Activated CD4-positive, alpha-beta memory T cell treated with anti-CD3 and anti-CD28 coated beads for 36 hours (primary cell): ENCODE measurements at regions of chr11 and their contacts with region 1.

Region 1: GRCh38 chr11:108222686-108223448 is at the start of gene ATM:
- DNase-seq: peak; percentile 99
- H3K4me3 Mint-ChIP-seq: no peak within 1 kb of the TSS
- H3K27ac Mint-ChIP-seq: no peak within 1 kb of the TSS
- H3K4me1 Mint-ChIP-seq: peaks cover 49% of the 10 kb centered on the region
- H3K27me3 Mint-ChIP-seq: no peaks in the 10 kb centered on the region
- total RNA-seq, gene ATM: 31.3 to 31.6 TPM

Region 2: DNA sequence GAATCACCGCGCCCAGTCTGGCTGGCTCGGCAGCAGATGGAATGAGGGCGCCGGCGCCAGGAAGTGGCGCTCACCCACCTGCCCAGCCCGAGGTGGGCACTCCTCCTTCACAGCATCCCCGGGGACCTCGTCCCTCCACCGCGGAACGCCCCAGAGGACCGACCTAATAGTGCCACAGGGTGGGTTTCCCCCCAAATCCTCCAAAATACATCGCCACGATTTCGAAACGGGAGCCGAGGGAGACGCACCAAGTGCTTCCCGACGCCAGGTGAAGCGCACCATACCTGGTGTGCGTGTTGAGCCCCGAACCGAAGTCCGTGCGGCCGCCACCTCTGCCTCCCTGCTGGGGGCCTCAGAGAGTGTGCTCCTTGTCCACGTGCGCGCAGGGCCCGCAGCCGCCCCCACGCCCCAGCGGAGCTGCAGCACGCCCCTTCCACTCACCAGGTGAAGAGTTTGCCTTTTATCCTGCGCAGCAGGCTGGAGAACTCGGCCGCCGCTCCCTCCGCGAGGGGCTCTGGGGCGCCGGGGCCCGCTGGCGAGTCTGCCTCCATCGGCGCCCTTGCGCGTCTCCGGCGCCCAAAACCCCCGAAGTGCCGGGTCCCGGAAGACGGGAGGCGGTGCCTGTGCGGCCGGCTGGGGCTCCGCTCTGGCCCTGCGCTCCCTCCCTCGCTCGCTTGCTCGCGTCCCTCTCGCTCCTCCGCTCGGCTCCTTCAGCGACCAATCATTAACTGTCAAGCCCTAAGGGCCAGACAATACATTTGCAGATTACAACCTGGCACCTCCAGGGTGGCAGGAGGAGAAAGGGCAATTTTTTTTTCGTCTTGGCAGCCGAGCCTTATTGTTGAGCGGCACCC is 364.4 kb before region 1 on chr11 and contains the start of gene SLC35F2:
- CTCF ChIA-PET with region 1: no interaction called
- POLR2A ChIA-PET with region 1: no interaction called
- intact Hi-C with region 1: loop called (anchors 5 kb)
- DNase-seq: peak; percentile 83
- H3K4me3 Mint-ChIP-seq: peak within 1 kb of the TSS; percentile 95
- H3K27ac Mint-ChIP-seq: peak within 1 kb of the TSS; percentile 92
- H3K4me1 Mint-ChIP-seq: peaks cover 31% of the 10 kb centered on the region
- H3K27me3 Mint-ChIP-seq: no peaks in the 10 kb centered on the region
- total RNA-seq, gene SLC35F2: 22.8 to 24.5 TPM

Region 3: DNA sequence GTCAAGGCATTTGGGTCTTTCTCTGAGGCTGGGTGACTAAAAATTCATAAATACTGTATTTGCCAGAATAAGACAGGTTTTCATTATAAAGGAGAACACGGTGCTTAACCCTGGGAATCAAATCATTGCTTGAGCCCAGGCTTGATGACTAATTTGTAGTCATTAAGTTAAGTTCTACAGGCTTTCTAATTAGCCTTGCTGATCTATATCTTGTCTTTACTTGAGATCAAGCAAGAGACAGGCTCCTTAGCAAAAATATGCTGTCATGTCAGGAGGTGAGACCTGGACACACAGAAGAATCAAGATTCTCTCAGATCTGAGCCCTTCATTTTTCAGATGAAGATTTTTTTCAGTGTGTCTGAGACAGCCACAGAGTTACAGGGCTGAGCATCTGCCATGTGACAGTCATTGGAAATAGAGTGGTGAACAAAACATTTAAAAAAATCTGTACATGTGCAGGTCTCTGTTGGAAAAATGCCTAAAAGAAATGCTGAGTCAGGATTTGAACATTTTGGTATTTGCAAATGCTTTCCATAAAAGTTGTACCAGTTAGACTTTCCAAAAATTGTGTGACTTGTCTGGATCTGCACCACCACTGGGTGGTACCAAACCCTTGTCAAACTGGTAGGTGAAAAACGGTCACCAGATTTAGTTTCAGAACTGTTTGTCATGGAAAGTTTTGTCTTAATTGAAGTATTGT is 86.9 kb before region 1 on chr11:
- CTCF ChIA-PET with region 1: no interaction called
- POLR2A ChIA-PET with region 1: no interaction called
- intact Hi-C with region 1: loop called (anchors 1 kb)
- DNase-seq: peak; percentile 55
- H3K4me3 Mint-ChIP-seq: no peak overlapping the region
- H3K27ac Mint-ChIP-seq: peak overlapping the region; percentile 68
- H3K4me1 Mint-ChIP-seq: peaks cover 24% of the 10 kb centered on the region
- H3K27me3 Mint-ChIP-seq: no peaks in the 10 kb centered on the region

Region 4: DNA sequence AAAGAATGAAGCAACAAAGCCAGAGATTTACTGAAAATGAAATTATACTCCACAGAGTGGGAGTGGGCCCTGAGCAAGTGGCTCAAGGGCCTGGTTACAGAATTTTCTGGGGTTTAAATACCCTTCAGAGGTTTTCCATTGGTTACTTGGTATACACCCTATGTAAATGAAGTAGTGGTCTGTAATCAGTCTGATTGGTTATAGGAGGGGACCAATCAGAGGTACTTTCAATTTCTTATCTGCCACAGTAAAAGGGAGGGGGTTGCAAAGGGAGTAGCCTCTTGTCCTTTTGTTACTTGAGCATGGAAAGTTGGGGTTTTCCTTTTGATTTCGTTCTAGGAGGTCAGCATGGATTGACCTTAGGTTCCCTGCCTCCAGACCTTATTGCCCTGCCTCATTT is 63.5 kb after region 1 on chr11:
- CTCF ChIA-PET with region 1: no interaction called
- POLR2A ChIA-PET with region 1: interaction called, 3 read pairs
- intact Hi-C with region 1: loop called (anchors 2 kb)
- DNase-seq: no peak
- H3K4me3 Mint-ChIP-seq: no peak overlapping the region
- H3K27ac Mint-ChIP-seq: no peak overlapping the region
- H3K4me1 Mint-ChIP-seq: peaks cover 14% of the 10 kb centered on the region
- H3K27me3 Mint-ChIP-seq: no peaks in the 10 kb centered on the region

Region 5: DNA sequence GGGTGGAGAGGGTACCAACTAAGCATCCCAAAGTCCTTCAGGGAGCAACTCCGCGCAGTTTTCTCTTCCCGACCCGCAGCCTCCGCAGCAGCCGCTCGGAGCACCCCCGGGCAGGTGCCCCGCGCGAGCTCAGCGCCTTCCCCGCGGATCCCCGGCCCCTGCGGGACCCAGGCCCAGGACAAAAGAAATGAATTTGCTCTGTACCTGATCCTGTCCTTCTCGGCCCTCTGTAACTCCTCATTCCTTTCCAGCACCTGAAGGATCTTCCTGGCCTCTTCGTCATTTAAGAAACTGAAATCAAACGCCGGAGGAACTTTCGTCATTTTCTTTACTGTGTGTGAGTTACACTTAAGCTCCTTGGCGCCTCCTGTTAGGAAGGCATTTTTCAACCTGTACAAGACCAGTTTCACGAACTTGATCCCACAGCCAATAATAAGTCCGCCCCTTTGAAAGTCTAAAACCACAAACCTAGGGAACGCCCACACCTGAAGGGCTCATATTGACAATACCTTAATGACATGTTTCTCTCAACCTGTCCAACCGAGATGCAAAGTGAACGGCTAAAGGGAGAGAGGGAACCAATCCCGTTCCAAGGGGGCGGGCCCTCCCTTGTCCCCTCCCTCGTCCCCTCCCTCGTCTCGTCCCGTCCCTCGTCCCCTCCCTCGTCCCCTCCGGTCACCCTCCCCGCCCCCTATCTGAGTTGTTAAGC is 370.5 kb after region 1 on chr11 and contains the start of gene EXPH5:
- CTCF ChIA-PET with region 1: interaction called, 5 read pairs
- POLR2A ChIA-PET with region 1: no interaction called
- intact Hi-C with region 1: loop called (anchors 1 kb)
- DNase-seq: peak; percentile 93
- H3K4me3 Mint-ChIP-seq: peak within 1 kb of the TSS; percentile 87
- H3K27ac Mint-ChIP-seq: peak within 1 kb of the TSS; percentile 68
- H3K4me1 Mint-ChIP-seq: peaks cover 17% of the 10 kb centered on the region
- H3K27me3 Mint-ChIP-seq: peaks cover 11% of the 10 kb centered on the region
- total RNA-seq, gene EXPH5: 1.4 to 1.8 TPM